ENCODE measurements at regions of chr21 and their contacts with region 1.

Region 1: DNA sequence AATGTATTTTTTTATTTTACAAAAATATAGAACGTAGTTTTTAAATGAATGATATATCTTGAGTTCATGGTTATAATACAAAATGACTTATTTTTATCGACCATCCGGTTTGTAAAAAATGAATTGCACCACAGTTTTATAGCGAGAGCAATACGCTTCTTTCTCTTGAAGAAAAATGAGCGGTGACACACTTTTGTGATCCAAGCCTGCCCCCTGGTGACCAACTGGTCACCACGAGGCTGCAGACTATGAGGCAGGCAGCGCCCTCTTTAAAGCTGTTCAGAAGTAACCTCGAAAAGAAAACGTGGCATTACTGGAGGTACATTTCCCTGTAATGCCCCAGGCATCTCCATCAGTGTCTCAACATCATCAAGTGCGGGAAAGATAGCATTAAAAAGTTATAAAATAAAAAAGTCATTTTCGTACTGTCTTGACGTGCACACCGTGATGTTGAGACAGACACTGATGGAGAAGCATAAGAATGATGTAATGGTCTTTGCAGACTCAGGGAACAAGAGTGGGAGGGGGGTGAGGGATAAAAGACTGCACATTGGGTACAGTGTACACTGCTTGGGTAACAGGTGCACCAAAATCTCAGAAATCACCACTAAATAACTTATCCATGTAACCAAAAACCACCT is 734.2 kb upstream of the ADAMTS5 start:
- DNase-seq: peak; percentile 82 to 88 (median 82)
- ATAC-seq: peak; percentile 61 to 92 (median 88)
- H3K4me3 ChIP-seq: no peak overlapping the region
- H3K27ac ChIP-seq: no peak overlapping the region
- H3K4me1 ChIP-seq: peaks cover 0 to 8% (median 0%) of the 10 kb centered on the region in 12 donors
- H3K27me3 ChIP-seq: no peaks in the 10 kb centered on the region
- CTCF ChIP-seq: peak; percentile 72 to 97 (median 92)
- POLR2A ChIP-seq: no peak

Region 2: DNA sequence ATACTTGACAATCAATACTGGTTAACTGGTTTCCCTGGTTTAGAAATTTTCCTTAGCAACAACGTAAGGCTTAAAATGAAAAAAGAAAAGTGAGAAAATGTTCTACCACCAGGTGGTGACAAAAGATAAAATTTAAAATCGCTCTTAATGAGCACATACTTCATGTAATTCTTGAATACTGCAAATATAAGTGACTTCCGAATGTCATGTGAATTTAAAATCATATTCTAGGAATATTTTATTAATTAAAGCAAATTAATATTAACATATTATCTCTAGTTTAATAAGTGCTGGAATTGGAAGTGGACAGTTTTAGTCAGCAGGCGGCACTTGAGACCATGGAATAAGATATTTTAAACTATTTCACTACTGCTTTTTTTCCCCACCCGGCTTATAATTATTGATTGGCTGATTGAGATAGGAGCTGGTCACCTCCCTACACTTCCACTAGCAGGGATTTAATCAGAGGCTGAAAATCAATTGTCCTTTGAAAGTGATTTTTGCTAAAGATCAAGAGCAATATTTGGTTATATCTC is 850.9 kb before region 1 on chr21:
- intact Hi-C with region 1: loop called (anchors 1 to 2 kb)
- DNase-seq: no peak
- ATAC-seq: no peak
- H3K4me3 ChIP-seq: peak overlapping the region in 6 of 12 donors; percentile 3 to 40 (median 8)
- H3K27ac ChIP-seq: no peak overlapping the region
- H3K4me1 ChIP-seq: peaks cover 0 to 19% (median 5%) of the 10 kb centered on the region in 12 donors
- H3K27me3 ChIP-seq: peaks cover 0 to 14% (median 0%) of the 10 kb centered on the region in 9 donors
- CTCF ChIP-seq: peak; percentile 44 to 86 (median 72)
- POLR2A ChIP-seq: no peak

Region 3: DNA sequence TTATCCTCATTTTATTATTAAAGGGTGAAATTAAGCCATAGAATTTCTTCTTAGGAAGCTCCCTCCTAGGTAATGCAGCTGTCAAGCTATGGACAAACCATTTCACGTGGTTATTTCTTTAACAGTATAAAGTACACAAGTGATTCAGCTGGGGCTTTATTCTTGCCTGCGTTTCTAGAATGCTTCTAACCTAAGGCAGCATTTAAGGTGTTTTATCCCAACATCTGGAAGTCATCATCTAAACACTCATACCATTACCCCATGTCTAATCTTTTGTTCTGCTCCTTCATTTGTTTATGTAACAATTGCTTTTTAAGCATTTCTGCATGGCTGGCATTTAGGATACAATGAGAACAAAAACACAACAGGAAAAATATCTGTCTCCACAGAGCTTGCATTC is 95.0 kb after region 1 on chr21:
- intact Hi-C with region 1: loop called in 1 of 10 experiments (anchors 5 kb)
- DNase-seq: no peak
- ATAC-seq: no peak
- H3K4me3 ChIP-seq: no peak overlapping the region
- H3K27ac ChIP-seq: no peak overlapping the region
- H3K4me1 ChIP-seq: peaks cover 0 to 9% (median 0%) of the 10 kb centered on the region in 12 donors
- H3K27me3 ChIP-seq: no peaks in the 10 kb centered on the region
- CTCF ChIP-seq: no peak
- POLR2A ChIP-seq: no peak

Region 4: DNA sequence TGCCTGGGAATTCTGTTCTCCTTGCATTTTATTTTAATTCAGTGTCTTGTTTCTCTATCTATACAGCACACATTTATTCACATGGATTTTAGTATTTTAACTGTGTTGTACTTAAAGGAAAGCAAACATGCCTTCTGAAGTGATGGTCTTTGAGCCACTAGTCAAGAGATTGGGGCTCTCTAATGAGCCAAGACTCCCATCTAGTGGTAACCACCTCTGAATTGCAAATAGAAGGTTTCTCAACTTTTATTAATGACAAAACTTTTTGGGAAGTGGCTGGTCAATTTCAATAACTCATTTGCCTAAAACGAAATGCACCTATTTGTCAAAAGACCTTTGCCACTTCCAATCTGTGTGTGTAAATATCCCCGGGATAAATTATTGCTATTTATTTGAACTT is 1091.9 kb after region 1 on chr21:
- intact Hi-C with region 1: loop called in 1 of 10 experiments (anchors 5 kb)
- DNase-seq: no peak
- ATAC-seq: peak in 2 of 4 donors; percentile 59 to 72
- H3K4me3 ChIP-seq: no peak overlapping the region
- H3K27ac ChIP-seq: no peak overlapping the region
- H3K4me1 ChIP-seq: peaks cover 0 to 12% (median 5%) of the 10 kb centered on the region in 12 donors
- H3K27me3 ChIP-seq: no peaks in the 10 kb centered on the region
- CTCF ChIP-seq: peak in 10 of 12 donors; percentile 38 to 65 (median 54)
- POLR2A ChIP-seq: no peak

Measured in heart left ventricle (tissue), 16 donors.